Activated naive CD4-positive, alpha-beta T cell treated with anti-CD3 and anti-CD28 coated beads, Interleukin-2, amount 10 ng/mL, durations not matched to agents 7 days and 5 days (primary cell): ENCODE measurements at regions of chr13 and their contacts with region 1.

Region 1: DNA sequence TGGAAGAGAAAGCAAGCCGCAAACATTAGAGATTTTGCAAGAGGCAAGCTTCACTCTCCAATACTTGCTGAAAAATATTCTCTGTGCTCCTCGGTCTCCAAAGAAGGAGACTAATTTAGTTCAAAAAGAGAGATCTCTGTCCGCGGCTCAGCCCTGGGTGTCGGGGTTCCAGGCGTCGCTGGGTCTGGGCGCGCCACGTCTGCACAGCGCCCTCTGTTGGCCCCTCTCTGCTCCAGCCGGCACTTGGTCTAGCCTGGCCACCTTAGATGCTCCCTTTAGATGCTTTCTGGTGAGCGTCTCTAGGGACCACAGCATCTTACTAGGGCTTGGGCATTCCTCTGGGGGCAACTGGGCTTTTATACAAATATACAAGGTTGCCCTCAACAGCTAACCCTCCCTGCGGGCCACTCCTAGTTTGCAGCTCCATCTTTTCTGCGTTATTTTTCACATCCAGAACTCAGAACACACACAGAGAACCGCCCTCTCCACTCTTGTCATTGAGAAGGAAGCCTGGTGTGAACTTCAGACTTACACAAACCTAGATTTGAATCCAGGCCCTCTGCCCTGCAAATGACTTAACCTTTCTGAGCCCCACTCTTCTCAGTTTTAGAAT is 78.3 kb downstream of the CYSLTR2 start:
- DNase-seq: peak; percentile 70
- H3K4me3 Mint-ChIP-seq: peak overlapping the region; percentile 61
- H3K27ac Mint-ChIP-seq: no peak overlapping the region
- H3K4me1 Mint-ChIP-seq: peaks cover 7% of the 10 kb centered on the region
- H3K27me3 Mint-ChIP-seq: peaks cover 10% of the 10 kb centered on the region

Region 2: GRCh38 chr13:48037346-48038173 is 694.5 kb before region 1 on chr13 and contains the start of gene NUDT15:
- CTCF ChIA-PET with region 1: no interaction called
- DNase-seq: peak; percentile 97
- H3K4me3 Mint-ChIP-seq: peak within 1 kb of the TSS; percentile 96
- H3K27ac Mint-ChIP-seq: peak within 1 kb of the TSS; percentile 96
- H3K4me1 Mint-ChIP-seq: peaks cover 48% of the 10 kb centered on the region
- H3K27me3 Mint-ChIP-seq: peaks cover 5% of the 10 kb centered on the region

Region 3: DNA sequence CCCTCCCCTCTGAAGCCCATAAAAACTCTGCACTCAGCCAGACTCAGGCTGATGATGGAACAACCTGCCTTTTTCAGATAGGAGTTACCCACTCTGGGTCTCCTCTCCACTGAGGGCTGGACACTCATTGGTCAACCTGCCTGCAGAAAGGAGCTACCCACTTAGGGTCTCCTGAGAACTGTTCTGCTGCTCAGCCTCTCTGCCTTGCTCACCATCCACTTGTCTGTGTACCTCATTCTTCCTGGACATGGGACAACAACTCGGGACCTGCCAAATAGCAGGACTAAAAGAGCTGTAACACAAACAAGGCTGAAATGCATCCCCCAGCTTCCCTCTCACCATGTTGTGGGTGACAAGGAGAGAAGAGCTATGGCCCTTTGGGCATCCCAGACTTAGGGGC is 180.7 kb before region 1 on chr13:
- CTCF ChIA-PET with region 1: no interaction called
- DNase-seq: no peak
- H3K4me3 Mint-ChIP-seq: no peak overlapping the region
- H3K27ac Mint-ChIP-seq: no peak overlapping the region
- H3K4me1 Mint-ChIP-seq: no peaks in the 10 kb centered on the region
- H3K27me3 Mint-ChIP-seq: peaks cover 20% of the 10 kb centered on the region

Region 4: GRCh38 chr13:48595431-48596429 is 136.3 kb before region 1 on chr13:
- CTCF ChIA-PET with region 1: interaction called, 53 read pairs
- DNase-seq: peak; percentile 75
- H3K4me3 Mint-ChIP-seq: no peak overlapping the region
- H3K27ac Mint-ChIP-seq: no peak overlapping the region
- H3K4me1 Mint-ChIP-seq: no peaks in the 10 kb centered on the region
- H3K27me3 Mint-ChIP-seq: peaks cover 20% of the 10 kb centered on the region

Region 5: DNA sequence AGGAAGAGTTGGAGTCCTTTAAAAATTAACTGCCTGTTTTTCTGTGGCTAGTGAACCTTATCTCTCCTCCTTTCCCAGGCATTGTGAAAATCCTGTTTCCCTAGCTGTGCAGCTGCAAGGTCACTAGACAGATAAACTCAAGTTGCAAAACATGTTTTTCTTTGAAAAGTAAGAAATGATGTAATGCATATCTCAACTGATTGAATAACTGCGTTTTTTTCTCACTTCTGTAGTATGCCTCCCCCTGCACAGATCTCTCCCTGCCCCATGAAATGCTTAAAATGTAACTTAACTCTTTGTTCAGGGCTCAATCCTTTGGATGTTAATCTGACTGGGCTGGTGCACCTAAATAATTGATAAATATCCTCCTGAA is 106.0 kb before region 1 on chr13:
- CTCF ChIA-PET with region 1: no interaction called
- DNase-seq: no peak
- H3K4me3 Mint-ChIP-seq: no peak overlapping the region
- H3K27ac Mint-ChIP-seq: no peak overlapping the region
- H3K4me1 Mint-ChIP-seq: no peaks in the 10 kb centered on the region
- H3K27me3 Mint-ChIP-seq: no peaks in the 10 kb centered on the region

Region 6: GRCh38 chr13:48709213-48709612 is 22.9 kb before region 1 on chr13:
- CTCF ChIA-PET with region 1: interaction called, 10 read pairs
- DNase-seq: no peak
- H3K4me3 Mint-ChIP-seq: no peak overlapping the region
- H3K27ac Mint-ChIP-seq: no peak overlapping the region
- H3K4me1 Mint-ChIP-seq: peaks cover 3% of the 10 kb centered on the region
- H3K27me3 Mint-ChIP-seq: peaks cover 9% of the 10 kb centered on the region

Region 7: DNA sequence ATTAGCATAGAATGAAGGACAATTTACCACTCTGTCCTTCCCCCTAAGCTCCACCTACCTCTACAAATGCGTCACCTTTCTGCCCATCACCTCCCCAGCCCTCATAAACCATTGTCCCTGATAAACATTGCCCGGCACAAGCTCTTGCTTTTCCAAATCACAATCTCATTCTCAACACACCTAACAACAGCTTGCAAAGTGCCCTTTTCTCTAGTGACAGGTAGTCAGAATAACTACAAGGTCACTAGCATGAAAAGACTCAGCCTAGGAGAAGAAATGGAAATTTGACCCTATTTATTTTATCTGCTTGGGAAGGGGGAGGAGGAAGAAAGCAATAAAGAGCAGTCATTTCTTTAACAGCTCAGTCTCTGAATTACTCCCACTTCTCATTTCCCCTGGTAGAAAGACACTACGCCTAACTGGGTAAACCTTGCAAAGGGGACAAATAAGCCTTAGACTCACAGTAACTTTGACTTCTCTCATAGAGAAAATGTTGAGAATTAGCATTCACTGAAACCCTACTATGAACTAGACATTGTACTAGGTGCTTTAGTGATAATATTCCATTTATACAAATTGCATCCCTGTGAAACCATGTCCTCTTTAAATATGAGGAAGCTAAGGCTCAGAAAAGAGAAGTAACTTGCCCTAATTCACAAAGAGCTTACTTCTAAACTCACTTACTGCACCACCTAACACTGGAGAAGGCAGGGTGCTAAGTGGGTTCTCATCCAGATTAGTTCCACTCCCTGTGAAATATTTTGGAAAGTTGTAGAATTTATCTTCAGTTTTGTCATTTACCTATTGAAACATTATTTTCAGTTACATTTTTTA is 127.4 kb after region 1 on chr13:
- CTCF ChIA-PET with region 1: no interaction called
- DNase-seq: no peak
- H3K4me3 Mint-ChIP-seq: no peak overlapping the region
- H3K27ac Mint-ChIP-seq: no peak overlapping the region
- H3K4me1 Mint-ChIP-seq: peaks cover 19% of the 10 kb centered on the region
- H3K27me3 Mint-ChIP-seq: no peaks in the 10 kb centered on the region